Naive thymus-derived CD4-positive, alpha-beta T cell (primary cell): ENCODE measurements at regions of chr3 and their contacts with region 1.

Region 1: GRCh38 chr3:125916376-125916978 is 52.5 kb upstream of the ROPN1B start:
- DNase-seq: peak in 6 of 9 donors; percentile 91 to 96 (median 94)
- ATAC-seq: peak; percentile 98
- H3K4me3 ChIP-seq: peak overlapping the region; percentile 75
- H3K4me3 Mint-ChIP-seq: peak overlapping the region; percentile 82 to 94 (median 91)
- H3K27ac ChIP-seq: peak overlapping the region; percentile 83
- H3K27ac Mint-ChIP-seq: peak overlapping the region; percentile 86 to 99 (median 94)
- H3K4me1 ChIP-seq: no peaks in the 10 kb centered on the region
- H3K4me1 Mint-ChIP-seq: peaks cover 6 to 18% (median 13%) of the 10 kb centered on the region in 7 donors
- H3K27me3 ChIP-seq: no peaks in the 10 kb centered on the region
- H3K27me3 Mint-ChIP-seq: no peaks in the 10 kb centered on the region

Region 2: DNA sequence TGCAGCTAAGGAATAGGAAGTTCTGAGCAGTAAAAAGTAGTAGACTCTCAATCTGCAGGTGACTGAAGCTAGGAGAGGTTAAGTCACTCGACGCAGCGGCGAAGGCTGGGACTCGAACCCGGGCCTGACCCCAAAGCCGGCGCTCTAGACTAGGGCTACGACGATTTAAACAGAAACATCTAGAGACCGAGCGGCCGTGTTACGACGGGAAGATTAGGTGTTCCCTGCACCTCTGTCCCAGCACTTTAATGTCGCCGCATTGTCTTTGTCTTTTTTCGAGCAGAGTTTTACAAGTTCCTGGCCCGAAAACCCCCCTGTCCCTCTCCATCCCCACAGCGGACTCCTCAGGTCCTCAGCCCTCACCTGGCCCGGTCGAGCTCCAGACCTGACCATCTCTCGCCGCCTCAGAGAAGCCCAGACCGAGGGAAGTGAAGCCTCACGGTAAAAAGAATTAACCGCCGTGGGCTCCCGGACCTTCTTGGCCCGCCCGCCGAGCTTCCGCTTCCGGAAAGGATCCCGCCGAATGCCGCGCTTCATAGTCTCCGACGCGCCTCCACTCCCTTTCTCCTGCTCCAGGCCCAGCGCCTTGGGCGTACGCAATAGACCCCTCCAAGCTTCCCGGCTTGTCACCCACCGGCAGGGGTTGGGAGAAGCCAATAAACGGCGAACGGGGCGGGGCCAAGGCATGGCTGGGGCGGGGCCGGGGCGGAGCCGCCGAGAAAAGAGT is 1955.5 kb before region 1 on chr3 and contains the start of gene CCDC14:
- CTCF ChIA-PET with region 1: no interaction called
- POLR2A ChIA-PET with region 1: no interaction called
- intact Hi-C with region 1: loop called in 1 of 2 experiments (anchors 5 kb)
- DNase-seq: peak; percentile 43 to 81 (median 60)
- ATAC-seq: peak; percentile 91
- H3K4me3 ChIP-seq: peak within 1 kb of the TSS; percentile 85
- H3K4me3 Mint-ChIP-seq: peak within 1 kb of the TSS; percentile 93 to 98 (median 96)
- H3K27ac ChIP-seq: peak within 1 kb of the TSS; percentile 78
- H3K27ac Mint-ChIP-seq: peak within 1 kb of the TSS; percentile 82 to 96 (median 91)
- H3K4me1 ChIP-seq: peaks cover 0 to 12% of the 10 kb centered on the region in 2 donors
- H3K4me1 Mint-ChIP-seq: peaks cover 12 to 35% (median 30%) of the 10 kb centered on the region in 7 donors
- H3K27me3 ChIP-seq: no peaks in the 10 kb centered on the region
- H3K27me3 Mint-ChIP-seq: peaks cover 0 to 30% (median 8%) of the 10 kb centered on the region in 5 donors
- total RNA-seq, gene CCDC14: 24.6 to 48.1 (median 37.3) TPM

Region 3: GRCh38 chr3:125519678-125520589 is 396.5 kb before region 1 on chr3 and contains the start of gene SNX4:
- CTCF ChIA-PET with region 1: no interaction called
- POLR2A ChIA-PET with region 1: no interaction called
- intact Hi-C with region 1: loop called in 1 of 2 experiments (anchors 5 kb)
- DNase-seq: peak; percentile 70 to 87 (median 82)
- ATAC-seq: peak; percentile 97
- H3K4me3 ChIP-seq: peak within 1 kb of the TSS; percentile 71
- H3K4me3 Mint-ChIP-seq: peak within 1 kb of the TSS; percentile 89 to 98 (median 96)
- H3K27ac ChIP-seq: peak within 1 kb of the TSS; percentile 87
- H3K27ac Mint-ChIP-seq: peak within 1 kb of the TSS; percentile 85 to 96 (median 92)
- H3K4me1 ChIP-seq: peaks cover 0 to 4% of the 10 kb centered on the region in 2 donors
- H3K4me1 Mint-ChIP-seq: peaks cover 20 to 47% (median 37%) of the 10 kb centered on the region in 7 donors
- H3K27me3 ChIP-seq: no peaks in the 10 kb centered on the region
- H3K27me3 Mint-ChIP-seq: peaks cover 0 to 2% (median 0%) of the 10 kb centered on the region in 5 donors
- total RNA-seq, gene SNX4: 19.3 to 31.8 (median 25.2) TPM

Region 4: GRCh38 chr3:125990253-125990970 is 73.9 kb after region 1 on chr3:
- CTCF ChIA-PET with region 1: no interaction called
- POLR2A ChIA-PET with region 1: no interaction called
- intact Hi-C with region 1: loop called (anchors 1 to 2 kb)
- DNase-seq: peak in 8 of 9 donors; percentile 57 to 84 (median 73)
- ATAC-seq: peak; percentile 91
- H3K4me3 ChIP-seq: peak overlapping the region; percentile 80
- H3K4me3 Mint-ChIP-seq: peak overlapping the region; percentile 95 to 100 (median 98)
- H3K27ac ChIP-seq: peak overlapping the region; percentile 82
- H3K27ac Mint-ChIP-seq: peak overlapping the region; percentile 92 to 100 (median 98)
- H3K4me1 ChIP-seq: peaks cover 5 to 7% of the 10 kb centered on the region in 2 donors
- H3K4me1 Mint-ChIP-seq: peaks cover 10 to 41% (median 25%) of the 10 kb centered on the region in 7 donors
- H3K27me3 ChIP-seq: no peaks in the 10 kb centered on the region
- H3K27me3 Mint-ChIP-seq: peaks cover 0 to 23% (median 0%) of the 10 kb centered on the region in 5 donors

Region 5: DNA sequence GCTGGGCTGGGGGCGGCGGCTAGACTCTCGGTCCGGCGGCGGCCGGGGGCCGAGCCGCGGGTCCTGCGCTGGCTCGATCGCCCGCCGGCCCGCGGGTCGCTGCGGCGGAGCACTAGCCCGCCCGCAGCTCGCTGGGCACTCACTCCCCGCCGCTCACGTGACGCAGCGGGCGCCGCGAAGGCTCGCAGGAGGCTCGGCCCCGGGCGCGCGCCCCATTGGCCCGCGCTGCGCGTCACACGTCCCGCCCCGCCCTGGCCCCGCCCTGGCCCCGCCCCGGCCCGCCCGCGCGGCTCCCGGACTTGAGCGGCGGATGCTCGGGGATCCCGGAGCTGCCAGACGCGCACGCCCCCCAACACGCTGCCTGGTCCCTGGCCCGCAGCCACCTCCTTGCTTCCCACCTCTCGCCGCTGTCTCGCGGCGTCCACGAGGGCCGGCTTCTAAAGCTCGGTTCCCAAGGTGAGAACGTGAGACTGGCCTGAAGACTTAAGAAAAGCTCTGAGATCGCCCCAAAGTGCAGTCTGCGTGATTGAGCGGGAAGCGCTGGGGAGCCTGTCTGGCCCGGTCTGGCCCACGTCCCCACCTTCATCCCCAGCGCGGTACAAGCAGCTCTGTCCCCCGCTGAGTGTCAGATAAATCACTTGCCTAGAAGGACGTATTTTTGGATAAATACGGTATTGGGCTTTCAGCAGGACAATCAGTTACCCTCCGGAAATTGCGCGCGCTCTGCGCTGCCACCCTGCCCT is 441.0 kb after region 1 on chr3 and contains the start of gene KLF15:
- CTCF ChIA-PET with region 1: no interaction called
- POLR2A ChIA-PET with region 1: no interaction called
- intact Hi-C with region 1: loop called (anchors 1 to 10 kb)
- DNase-seq: peak; percentile 50 to 84 (median 66)
- ATAC-seq: peak; percentile 95
- H3K4me3 ChIP-seq: peak within 1 kb of the TSS; percentile 67
- H3K4me3 Mint-ChIP-seq: peak within 1 kb of the TSS; percentile 89 to 95 (median 91)
- H3K27ac ChIP-seq: no peak within 1 kb of the TSS
- H3K27ac Mint-ChIP-seq: peak within 1 kb of the TSS in 5 of 9 donors; percentile 45 to 93 (median 72)
- H3K4me1 ChIP-seq: peaks cover 4 to 7% of the 10 kb centered on the region in 2 donors
- H3K4me1 Mint-ChIP-seq: peaks cover 4 to 17% (median 11%) of the 10 kb centered on the region in 7 donors
- H3K27me3 ChIP-seq: peaks cover 9 to 10% of the 10 kb centered on the region in 2 donors
- H3K27me3 Mint-ChIP-seq: peaks cover 45 to 52% (median 46%) of the 10 kb centered on the region in 5 donors
- total RNA-seq, gene KLF15: 0.57 to 0.81 TPM in 2 of 5 experiments, not detected in the others

Region 6: DNA sequence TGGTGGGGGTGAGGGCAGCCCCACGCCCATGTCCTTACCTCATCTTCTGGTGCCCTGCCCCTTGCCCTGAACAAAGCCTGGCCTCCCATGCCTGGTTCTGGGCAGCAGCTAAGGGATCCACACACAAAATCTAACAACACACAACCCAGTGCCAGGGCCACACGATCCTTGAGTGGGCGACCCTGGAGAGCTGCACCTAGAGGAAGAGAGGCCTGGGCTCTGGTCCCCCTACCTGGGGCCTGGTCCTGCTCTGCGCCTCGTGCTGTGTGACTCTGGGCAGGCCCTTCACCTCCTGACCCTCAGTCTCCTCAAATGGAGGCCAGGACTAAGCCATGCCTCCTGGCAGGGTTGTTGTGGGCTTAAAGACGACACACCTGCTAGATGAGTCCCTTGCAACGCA is 662.2 kb after region 1 on chr3:
- CTCF ChIA-PET with region 1: no interaction called
- POLR2A ChIA-PET with region 1: no interaction called
- intact Hi-C with region 1: no loop called
- DNase-seq: no peak
- ATAC-seq: no peak
- H3K4me3 ChIP-seq: no peak overlapping the region
- H3K4me3 Mint-ChIP-seq: no peak overlapping the region
- H3K27ac ChIP-seq: no peak overlapping the region
- H3K27ac Mint-ChIP-seq: no peak overlapping the region
- H3K4me1 ChIP-seq: no peaks in the 10 kb centered on the region
- H3K4me1 Mint-ChIP-seq: no peaks in the 10 kb centered on the region
- H3K27me3 ChIP-seq: no peaks in the 10 kb centered on the region
- H3K27me3 Mint-ChIP-seq: peaks cover 0 to 24% (median 19%) of the 10 kb centered on the region in 5 donors

Region 7: GRCh38 chr3:126703512-126704462 is 787.3 kb after region 1 on chr3 and contains the start of gene CHCHD6:
- CTCF ChIA-PET with region 1: no interaction called
- POLR2A ChIA-PET with region 1: no interaction called
- intact Hi-C with region 1: loop called in 1 of 2 experiments (anchors 1 kb)
- DNase-seq: peak; percentile 92 to 99 (median 96)
- ATAC-seq: peak; percentile 99
- H3K4me3 ChIP-seq: peak within 1 kb of the TSS; percentile 82
- H3K4me3 Mint-ChIP-seq: peak within 1 kb of the TSS; percentile 83 to 99 (median 97)
- H3K27ac ChIP-seq: peak within 1 kb of the TSS; percentile 69
- H3K27ac Mint-ChIP-seq: peak within 1 kb of the TSS; percentile 71 to 98 (median 92)
- H3K4me1 ChIP-seq: peaks cover 6 to 13% of the 10 kb centered on the region in 2 donors
- H3K4me1 Mint-ChIP-seq: peaks cover 17 to 28% (median 21%) of the 10 kb centered on the region in 7 donors
- H3K27me3 ChIP-seq: peaks cover 0 to 5% of the 10 kb centered on the region in 2 donors
- H3K27me3 Mint-ChIP-seq: peaks cover 10 to 42% (median 19%) of the 10 kb centered on the region in 5 donors
- total RNA-seq, gene CHCHD6: 5.4 to 14.0 (median 10.0) TPM

Region 8: DNA sequence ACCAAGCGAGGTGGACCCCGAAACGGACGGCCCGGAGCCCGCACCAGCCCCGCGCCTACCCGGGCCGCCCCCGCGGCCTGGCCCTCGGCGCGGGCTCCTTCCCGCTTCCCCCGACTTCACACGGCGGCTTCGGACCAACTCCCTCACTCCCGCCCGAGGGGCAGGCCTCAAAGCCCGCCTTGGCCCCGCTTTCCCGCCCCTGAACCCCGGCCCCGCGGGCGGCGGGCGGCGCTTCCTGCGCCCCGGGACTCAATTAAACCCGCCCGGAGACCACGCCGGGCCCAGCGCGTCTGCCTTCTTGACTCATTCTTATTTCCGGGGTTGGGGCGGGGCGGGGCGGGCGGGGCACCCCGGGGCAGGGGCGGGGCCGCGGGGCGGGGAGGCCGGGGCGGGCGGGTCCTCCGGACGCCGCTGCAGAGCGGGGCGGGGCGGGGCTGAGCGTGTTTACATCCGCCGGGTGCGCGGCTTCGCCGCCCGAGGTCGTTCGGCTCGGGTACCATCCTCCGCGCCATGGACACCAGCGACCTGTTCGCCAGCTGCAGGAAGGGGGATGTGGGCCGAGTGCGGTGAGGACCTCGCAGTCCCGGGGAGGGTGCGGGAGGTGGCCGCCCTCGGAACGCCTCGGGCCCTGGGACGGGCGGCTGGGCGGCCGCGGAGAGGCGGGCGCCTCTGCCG is 1756.2 kb after region 1 on chr3 and contains the start of gene ABTB1:
- CTCF ChIA-PET with region 1: no interaction called
- POLR2A ChIA-PET with region 1: no interaction called
- intact Hi-C with region 1: loop called in 1 of 2 experiments (anchors 1 kb)
- DNase-seq: peak; percentile 73 to 88 (median 83)
- ATAC-seq: peak; percentile 93
- H3K4me3 ChIP-seq: peak within 1 kb of the TSS; percentile 86
- H3K4me3 Mint-ChIP-seq: peak within 1 kb of the TSS; percentile 88 to 96 (median 94)
- H3K27ac ChIP-seq: peak within 1 kb of the TSS; percentile 98
- H3K27ac Mint-ChIP-seq: peak within 1 kb of the TSS; percentile 92 to 98 (median 97)
- H3K4me1 ChIP-seq: peaks cover 13 to 17% of the 10 kb centered on the region in 2 donors
- H3K4me1 Mint-ChIP-seq: peaks cover 17 to 37% (median 33%) of the 10 kb centered on the region in 7 donors
- H3K27me3 ChIP-seq: no peaks in the 10 kb centered on the region
- H3K27me3 Mint-ChIP-seq: no peaks in the 10 kb centered on the region
- total RNA-seq, gene ABTB1: 26.7 to 182 (median 124) TPM